CD8-positive, alpha-beta T cell (primary cell): ENCODE measurements at regions of chr6 and their contacts with region 1.

Region 1: GRCh38 chr6:26457806-26458688 is at the start of gene BTN2A1:
- DNase-seq: peak; percentile 33 to 93 (median 65)
- ATAC-seq: peak; percentile 96
- H3K4me3 ChIP-seq: peak within 1 kb of the TSS; percentile 64 to 78
- H3K4me3 Mint-ChIP-seq: peak within 1 kb of the TSS; percentile 100
- H3K27ac ChIP-seq: peak within 1 kb of the TSS; percentile 61 to 92
- H3K27ac Mint-ChIP-seq: peak within 1 kb of the TSS; percentile 99
- H3K4me1 ChIP-seq: peaks cover 48% of the 10 kb centered on the region
- H3K4me1 Mint-ChIP-seq: peaks cover 68% of the 10 kb centered on the region
- H3K27me3 ChIP-seq: no peaks in the 10 kb centered on the region
- H3K27me3 Mint-ChIP-seq: no peaks in the 10 kb centered on the region
- CTCF ChIP-seq: no peak
- total RNA-seq, gene BTN2A1: 16.4 to 17.3 TPM

Region 2: DNA sequence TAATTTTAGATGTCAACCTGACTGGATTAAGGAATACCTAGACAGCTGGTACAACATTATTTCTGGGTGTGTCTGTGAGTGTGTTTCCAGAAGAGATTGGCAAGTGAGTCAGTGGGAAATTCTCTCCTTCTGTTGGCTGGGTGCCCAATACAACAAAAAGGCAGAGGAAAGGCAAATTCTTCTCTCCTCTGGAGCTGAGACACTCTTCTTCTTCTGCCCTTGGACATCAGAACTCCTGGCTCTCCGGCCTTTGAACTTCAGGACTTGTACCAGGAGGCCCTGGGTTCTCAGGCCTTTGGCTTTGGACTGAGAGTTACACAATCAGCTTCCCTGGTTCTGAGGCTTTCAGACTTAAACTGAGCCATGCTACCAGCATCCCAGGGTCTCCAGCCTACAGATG is 63.8 kb before region 1 on chr6:
- CTCF ChIA-PET with region 1: no interaction called
- POLR2A ChIA-PET with region 1: no interaction called
- intact Hi-C with region 1: no loop called
- DNase-seq: no peak
- ATAC-seq: no peak
- H3K4me3 ChIP-seq: no peak overlapping the region
- H3K4me3 Mint-ChIP-seq: no peak overlapping the region
- H3K27ac ChIP-seq: no peak overlapping the region
- H3K27ac Mint-ChIP-seq: no peak overlapping the region
- H3K4me1 ChIP-seq: no peaks in the 10 kb centered on the region
- H3K4me1 Mint-ChIP-seq: no peaks in the 10 kb centered on the region
- H3K27me3 ChIP-seq: no peaks in the 10 kb centered on the region
- H3K27me3 Mint-ChIP-seq: no peaks in the 10 kb centered on the region
- CTCF ChIP-seq: no peak

Region 3: DNA sequence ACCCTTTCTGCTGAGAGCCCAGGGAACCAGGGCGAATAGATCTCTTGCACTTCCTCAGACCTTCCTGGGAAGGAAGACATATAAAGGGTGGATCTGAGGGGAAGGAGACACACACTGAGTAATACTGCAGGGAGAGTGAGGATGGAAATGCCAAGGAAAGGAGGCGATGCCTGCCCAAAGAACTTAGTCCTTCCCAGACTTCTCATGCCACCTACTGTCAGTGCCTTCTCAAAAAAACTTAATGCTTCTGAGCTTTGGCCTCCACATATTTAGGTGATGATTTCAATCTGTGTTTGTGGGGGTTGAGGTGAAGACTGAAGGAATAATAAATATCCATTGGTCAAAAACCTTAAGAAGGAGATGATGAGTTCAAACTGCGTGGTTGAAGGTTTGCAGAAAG is 46.3 kb before region 1 on chr6:
- CTCF ChIA-PET with region 1: no interaction called
- POLR2A ChIA-PET with region 1: no interaction called
- intact Hi-C with region 1: no loop called
- DNase-seq: no peak
- ATAC-seq: no peak
- H3K4me3 ChIP-seq: no peak overlapping the region
- H3K4me3 Mint-ChIP-seq: no peak overlapping the region
- H3K27ac ChIP-seq: no peak overlapping the region
- H3K27ac Mint-ChIP-seq: peak overlapping the region; percentile 77
- H3K4me1 ChIP-seq: peaks cover 19% of the 10 kb centered on the region
- H3K4me1 Mint-ChIP-seq: peaks cover 33% of the 10 kb centered on the region
- H3K27me3 ChIP-seq: no peaks in the 10 kb centered on the region
- H3K27me3 Mint-ChIP-seq: no peaks in the 10 kb centered on the region
- CTCF ChIP-seq: no peak

Region 4: DNA sequence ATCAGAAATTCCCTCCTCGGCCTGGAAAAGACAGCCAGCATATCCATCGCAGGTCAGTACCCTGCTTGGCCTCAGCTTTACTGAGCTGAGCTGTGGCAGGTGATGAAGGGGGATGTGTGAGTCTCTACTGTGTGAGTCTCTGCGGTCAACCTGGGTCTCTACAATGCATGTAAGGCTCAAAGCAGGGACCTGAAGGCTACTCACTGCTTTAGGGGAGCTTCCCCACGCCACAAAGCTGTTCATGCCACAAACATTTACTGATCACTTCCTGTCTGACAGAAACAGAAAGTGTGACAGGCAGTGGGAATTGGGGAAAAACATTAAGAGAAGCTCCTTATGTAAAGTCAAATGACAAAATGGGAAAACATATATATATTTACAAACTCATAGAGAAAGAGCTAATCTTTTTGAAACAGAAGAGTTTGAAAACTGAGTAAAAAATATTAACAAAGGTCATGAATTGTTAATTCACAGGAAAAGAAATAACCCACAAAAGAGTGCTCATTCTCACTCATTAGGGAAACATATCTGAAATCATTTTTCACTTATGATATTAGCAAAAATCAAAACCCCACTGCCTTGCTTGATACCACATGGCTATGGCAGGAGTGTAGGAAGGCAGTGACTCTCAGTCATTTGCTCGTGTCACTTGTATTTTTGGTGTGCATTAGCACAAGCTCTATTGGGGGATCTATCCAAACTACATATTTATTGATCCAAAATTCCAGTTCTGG is 11.9 kb before region 1 on chr6:
- CTCF ChIA-PET with region 1: interaction called, 5 read pairs
- POLR2A ChIA-PET with region 1: interaction called, 4 read pairs
- intact Hi-C with region 1: loop called in 1 of 2 experiments (anchors 1 kb)
- DNase-seq: peak in 6 of 9 experiments; percentile 7 to 79 (median 32)
- ATAC-seq: peak; percentile 74
- H3K4me3 ChIP-seq: peak overlapping the region in 1 of 2 experiments; percentile 0
- H3K4me3 Mint-ChIP-seq: peak overlapping the region; percentile 75
- H3K27ac ChIP-seq: peak overlapping the region; percentile 1 to 64
- H3K27ac Mint-ChIP-seq: peak overlapping the region; percentile 95
- H3K4me1 ChIP-seq: peaks cover 44% of the 10 kb centered on the region
- H3K4me1 Mint-ChIP-seq: peaks cover 68% of the 10 kb centered on the region
- H3K27me3 ChIP-seq: no peaks in the 10 kb centered on the region
- H3K27me3 Mint-ChIP-seq: no peaks in the 10 kb centered on the region
- CTCF ChIP-seq: no peak

Region 5: DNA sequence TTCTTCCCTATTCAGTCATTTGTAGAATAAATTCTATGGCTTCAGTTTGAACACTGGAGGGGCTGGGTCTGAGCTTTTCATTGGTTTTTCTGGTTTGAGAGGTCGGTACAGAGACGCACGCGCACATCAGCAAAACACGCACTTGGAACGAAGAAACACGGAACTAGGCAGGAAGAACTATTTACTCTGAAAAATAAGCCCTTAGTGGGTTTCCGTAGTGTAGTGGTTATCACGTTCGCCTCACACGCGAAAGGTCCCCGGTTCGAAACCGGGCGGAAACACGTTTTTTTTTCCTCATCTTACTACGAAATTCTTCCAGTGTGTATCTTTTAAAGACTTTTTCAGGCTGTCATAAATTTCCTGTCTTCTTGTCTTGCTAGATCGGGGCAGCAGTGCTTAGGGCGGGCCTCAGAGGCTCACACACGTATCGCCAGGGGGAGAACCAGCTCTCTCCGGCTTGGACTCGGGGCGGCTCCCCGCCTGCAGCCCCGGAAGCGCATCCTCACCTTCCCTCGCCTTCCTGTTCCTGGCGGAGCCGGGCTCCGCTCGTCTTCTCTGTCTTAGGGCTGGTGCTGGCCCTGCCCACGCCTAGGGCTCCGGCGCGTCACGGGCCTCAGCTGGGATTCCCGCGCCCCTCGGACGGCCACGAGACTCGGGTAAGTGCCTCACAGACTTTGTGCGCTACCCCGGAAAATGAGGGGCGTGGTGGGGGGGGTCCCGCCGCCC is 80.0 kb after region 1 on chr6 and contains the start of gene HMGN4:
- CTCF ChIA-PET with region 1: no interaction called
- POLR2A ChIA-PET with region 1: interaction called, 3 read pairs
- intact Hi-C with region 1: loop called in 1 of 2 experiments (anchors 5 kb)
- DNase-seq: peak; percentile 65 to 96 (median 79)
- ATAC-seq: peak; percentile 69
- H3K4me3 ChIP-seq: peak within 1 kb of the TSS; percentile 66 to 99
- H3K4me3 Mint-ChIP-seq: peak within 1 kb of the TSS; percentile 89
- H3K27ac ChIP-seq: peak within 1 kb of the TSS; percentile 88 to 93
- H3K27ac Mint-ChIP-seq: peak within 1 kb of the TSS; percentile 92
- H3K4me1 ChIP-seq: peaks cover 32% of the 10 kb centered on the region
- H3K4me1 Mint-ChIP-seq: peaks cover 58% of the 10 kb centered on the region
- H3K27me3 ChIP-seq: no peaks in the 10 kb centered on the region
- H3K27me3 Mint-ChIP-seq: no peaks in the 10 kb centered on the region
- CTCF ChIP-seq: no peak
- total RNA-seq, gene HMGN4: 24.8 to 33.7 TPM

Region 6: DNA sequence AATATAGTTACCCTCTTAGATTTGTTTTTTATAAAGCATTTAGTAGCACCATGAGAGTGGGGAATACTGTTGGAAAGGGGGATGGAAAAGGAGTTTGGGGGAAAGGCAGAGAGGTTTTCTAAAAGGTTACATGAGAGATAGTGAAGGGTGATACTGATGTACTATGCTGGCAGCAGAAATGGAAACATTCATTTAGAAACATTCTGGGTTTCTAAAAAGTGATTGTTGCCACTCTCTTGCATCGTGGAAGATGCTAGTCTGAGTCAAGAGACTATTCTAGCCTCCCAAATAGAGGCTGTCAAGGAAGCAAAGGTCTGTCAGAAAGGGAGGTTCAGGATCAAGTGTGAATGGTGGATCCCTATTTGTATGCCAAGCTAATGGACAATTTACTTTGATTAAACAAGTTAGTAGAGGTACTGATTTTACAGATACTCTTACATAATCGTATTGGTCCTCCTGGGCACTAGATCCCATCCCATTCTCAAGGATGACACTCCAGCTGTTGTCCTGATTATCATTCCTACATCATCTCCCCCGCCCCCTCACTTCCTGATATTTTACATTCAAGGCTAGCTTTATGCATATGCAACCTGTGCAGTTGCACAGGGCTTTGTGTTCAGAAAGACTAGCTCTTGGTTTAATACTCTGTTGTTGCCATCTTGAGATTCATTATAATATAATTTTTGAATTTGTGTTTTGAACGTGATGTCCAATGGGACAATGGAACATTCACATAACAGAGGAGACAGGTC is 123.3 kb after region 1 on chr6:
- CTCF ChIA-PET with region 1: no interaction called
- POLR2A ChIA-PET with region 1: no interaction called
- intact Hi-C with region 1: no loop called
- DNase-seq: no peak
- ATAC-seq: no peak
- H3K4me3 ChIP-seq: no peak overlapping the region
- H3K4me3 Mint-ChIP-seq: no peak overlapping the region
- H3K27ac ChIP-seq: no peak overlapping the region
- H3K27ac Mint-ChIP-seq: no peak overlapping the region
- H3K4me1 ChIP-seq: peaks cover 8% of the 10 kb centered on the region
- H3K4me1 Mint-ChIP-seq: peaks cover 20% of the 10 kb centered on the region
- H3K27me3 ChIP-seq: no peaks in the 10 kb centered on the region
- H3K27me3 Mint-ChIP-seq: peaks cover 13% of the 10 kb centered on the region
- CTCF ChIP-seq: no peak